Lower lobe of right lung (tissue), 2 donors: ENCODE measurements at regions of chr14 and their contacts with region 1.

Region 1: GRCh38 chr14:50101417-50101816 is 15.0 kb downstream of the VCPKMT start:
- DNase-seq: no peak
- ATAC-seq: no peak
- H3K4me3 ChIP-seq: no peak overlapping the region
- H3K27ac ChIP-seq: no peak overlapping the region
- H3K4me1 ChIP-seq: no peaks in the 10 kb centered on the region
- H3K27me3 ChIP-seq: no peaks in the 10 kb centered on the region
- CTCF ChIP-seq: no peak

Region 2: DNA sequence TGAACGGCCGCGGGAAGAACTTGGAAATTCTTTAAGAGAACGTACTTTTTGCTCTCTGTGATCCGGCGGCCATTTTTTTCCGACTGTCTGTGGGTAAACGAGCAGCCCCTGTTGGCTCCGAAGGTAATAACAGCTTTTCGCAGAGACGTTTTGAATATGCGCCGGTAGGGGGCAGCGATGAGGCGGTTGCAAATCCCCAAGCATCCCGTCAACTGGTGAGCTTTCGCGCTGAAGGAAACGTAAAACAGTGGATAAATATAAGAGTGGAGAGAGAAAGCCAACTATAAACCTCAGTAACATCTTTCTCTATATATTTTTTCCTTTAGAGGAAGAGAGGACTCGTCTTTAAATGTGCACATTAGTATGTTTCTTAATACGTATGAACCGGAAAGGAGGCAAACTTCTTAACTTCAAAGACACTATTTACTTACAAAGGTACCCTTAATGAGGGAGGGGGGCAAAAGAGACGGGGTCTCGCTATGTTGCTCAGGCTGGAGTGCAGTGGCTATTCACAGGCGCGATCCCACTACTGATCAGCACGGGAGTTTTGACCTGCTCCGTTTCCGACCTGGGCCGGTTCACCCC is 239.2 kb before region 1 on chr14:
- intact Hi-C with region 1: loop called (anchors 5 kb)
- DNase-seq: peak; percentile 85
- ATAC-seq: peak; percentile 82 to 91
- H3K4me3 ChIP-seq: peak overlapping the region; percentile 79
- H3K27ac ChIP-seq: peak overlapping the region; percentile 99
- H3K4me1 ChIP-seq: peaks cover 39% of the 10 kb centered on the region
- H3K27me3 ChIP-seq: no peaks in the 10 kb centered on the region
- CTCF ChIP-seq: peak; percentile 99